Motor neuron (in vitro differentiated cells): ENCODE measurements at regions of chr10 and their contacts with region 1.

Region 1: GRCh38 chr10:69123747-69124562 is at the start of gene VPS26A:
- ATAC-seq: peak; percentile 73 to 90 (median 86)
- H3K4me3 ChIP-seq: peak within 1 kb of the TSS; percentile 59 to 96 (median 71)
- H3K27ac ChIP-seq: peak within 1 kb of the TSS; percentile 74 to 88
- H3K4me1 ChIP-seq: peaks cover 9 to 12% of the 10 kb centered on the region in 2 donors
- total RNA-seq, gene VPS26A: 20.1 to 59.9 (median 35.1) TPM

Region 2: DNA sequence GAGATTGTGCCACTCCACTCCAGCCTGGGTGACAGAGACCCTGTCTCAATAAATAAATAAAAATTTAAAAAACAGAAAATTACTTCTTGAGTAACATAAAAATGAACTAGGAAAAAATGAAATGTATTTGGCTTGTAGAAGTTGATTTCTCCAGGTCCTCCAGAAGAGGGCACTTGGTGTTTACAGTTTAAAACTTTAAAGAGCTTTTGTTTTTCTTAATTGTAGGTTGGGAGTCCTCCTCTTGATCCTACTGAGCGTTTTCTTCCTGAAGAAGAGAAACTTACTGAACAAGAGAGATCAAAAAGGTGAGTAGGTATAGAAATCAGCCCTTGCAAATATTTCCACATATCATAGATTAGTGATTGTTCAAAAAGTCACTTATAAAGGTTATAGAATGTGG is 119.1 kb before region 1 on chr10:
- in situ Hi-C with region 1: loop called in 1 of 9 experiments (anchors 25 kb)
- ATAC-seq: no peak
- H3K4me3 ChIP-seq: no peak overlapping the region
- H3K27ac ChIP-seq: no peak overlapping the region
- H3K4me1 ChIP-seq: no peaks in the 10 kb centered on the region

Region 3: DNA sequence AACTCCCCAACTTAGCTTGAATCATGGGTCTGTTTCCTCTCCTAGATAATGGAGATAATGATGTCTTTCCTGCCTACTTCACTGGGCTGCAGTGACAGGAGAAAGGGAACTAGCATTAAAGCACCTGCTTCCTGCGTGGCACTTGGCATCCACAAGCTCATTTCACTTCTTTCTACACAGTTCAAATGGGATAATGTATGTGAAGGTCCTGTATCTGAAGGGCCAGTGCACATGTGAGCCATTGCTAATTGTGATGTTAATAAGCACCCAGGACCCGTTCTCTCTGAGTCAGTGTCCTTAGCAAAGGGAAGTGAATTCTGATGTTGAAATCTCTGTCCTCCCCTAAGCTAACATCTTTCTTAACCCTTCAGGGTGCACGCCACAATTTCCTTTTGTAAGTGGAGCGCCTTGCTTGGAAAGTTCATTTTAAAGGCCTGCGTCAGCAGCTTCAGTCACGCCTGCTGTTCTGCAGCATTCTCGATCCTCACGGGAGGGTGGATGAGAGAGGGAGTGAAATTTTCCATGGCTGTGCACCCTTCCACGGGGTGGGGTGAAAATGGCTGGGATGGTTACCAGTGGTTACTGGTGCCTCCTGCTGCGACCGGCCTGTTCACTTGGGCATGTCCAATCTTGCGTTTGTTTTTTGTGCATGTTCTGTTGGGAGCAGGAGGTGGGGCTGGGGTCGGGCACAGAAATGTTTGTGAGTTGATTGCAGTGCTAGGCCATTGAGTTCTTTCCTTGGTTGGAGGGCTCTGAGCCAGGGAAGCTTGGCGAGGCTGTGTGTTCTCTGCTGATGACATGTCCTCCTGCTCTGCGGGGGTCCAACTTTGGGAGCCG is 213.6 kb after region 1 on chr10:
- in situ Hi-C with region 1: no loop called
- ATAC-seq: peak in 7 of 8 experiments; percentile 60 to 87 (median 81)
- H3K4me3 ChIP-seq: no peak overlapping the region
- H3K27ac ChIP-seq: peak overlapping the region; percentile 18 to 60
- H3K4me1 ChIP-seq: peaks cover 27 to 45% of the 10 kb centered on the region in 2 donors